GM12878 (cell line): ENCODE measurements at regions of chr4 and their contacts with region 1.

Region 1: DNA sequence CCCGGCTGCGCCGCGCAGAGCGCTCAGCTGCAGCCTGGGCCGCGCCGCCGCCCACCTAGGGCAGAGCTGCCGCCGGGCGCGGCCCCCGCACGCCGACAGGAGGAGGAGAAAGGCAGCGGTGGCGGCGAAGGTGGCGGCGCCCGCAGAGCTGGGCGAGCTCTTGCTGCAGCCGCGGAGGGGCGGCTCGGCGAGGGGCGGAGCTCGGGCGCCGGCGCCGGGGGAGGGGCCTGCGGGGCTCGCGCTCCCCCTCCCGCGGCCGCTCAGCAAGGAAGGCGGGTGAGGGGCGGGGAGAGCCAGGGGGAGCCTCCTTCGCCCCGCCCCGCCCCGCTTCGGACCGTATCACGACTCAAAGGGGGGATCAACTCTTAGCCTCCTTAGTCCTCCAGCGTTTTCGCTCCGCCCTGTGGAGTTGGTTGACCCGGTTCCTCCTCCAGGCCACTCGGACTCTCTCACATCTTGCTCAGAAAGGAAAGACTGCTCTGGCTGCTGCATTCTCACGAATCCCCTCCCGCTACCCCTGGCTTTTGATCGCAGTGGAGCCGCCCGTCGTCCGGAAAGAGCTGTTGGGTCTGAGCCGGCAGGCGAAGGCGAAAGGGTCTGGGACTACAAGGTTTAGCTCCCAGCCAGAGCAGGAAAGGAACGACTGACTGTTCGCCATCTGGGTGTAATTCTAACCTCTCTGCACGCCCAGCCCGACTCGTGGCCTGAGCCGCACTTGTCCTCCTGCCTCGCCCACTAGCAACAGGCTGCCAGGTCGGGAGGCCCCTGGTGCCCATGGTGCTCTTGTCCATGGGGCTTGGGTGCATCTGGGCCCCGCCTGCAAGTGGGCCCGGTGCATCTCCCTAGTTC is at the start of gene ATP8A1:
- DNase-seq: no peak
- ATAC-seq: peak; percentile 81
- H3K4me3 ChIP-seq: peak within 1 kb of the TSS; percentile 93
- H3K27ac ChIP-seq: peak within 1 kb of the TSS; percentile 91
- H3K4me1 ChIP-seq: peaks cover 5% of the 10 kb centered on the region; the same call in 1 of the 2 replicates
- H3K27me3 ChIP-seq: no peaks in the 10 kb centered on the region
- CTCF ChIP-seq: 0 out of 6 replicates have a peak, but pooled peaks of 1 of the 3 experiments have one; percentile 3
- EP300 ChIP-seq: 0 out of 4 replicates have a peak, but pooled peaks of 1 of the 2 experiments have one; percentile 18
- POLR2A ChIP-seq: peak; percentile 93
- RAD21 ChIP-seq: no peak
- polyA plus RNA-seq, gene ATP8A1: 9.0 to 9.5 TPM

Region 2: GRCh38 chr4:42596918-42597317 is 60.2 kb before region 1 on chr4:
- CTCF ChIA-PET with region 1: interaction called, 6 read pairs
- POLR2A ChIA-PET with region 1: interaction called, 3 read pairs
- RAD21 ChIA-PET with region 1: interaction called, 11 read pairs
- SMC1A ChIA-PET with region 1: interaction called, 7 read pairs
- in situ Hi-C with region 1: no loop called
- intact Hi-C with region 1: no loop called
- DNase-seq: peak; percentile 17
- ATAC-seq: peak; percentile 52
- H3K4me3 ChIP-seq: no peak overlapping the region
- H3K27ac ChIP-seq: no peak overlapping the region
- H3K4me1 ChIP-seq: no peaks in the 10 kb centered on the region
- H3K27me3 ChIP-seq: no peaks in the 10 kb centered on the region
- CTCF ChIP-seq: no peak
- EP300 ChIP-seq: no peak
- POLR2A ChIP-seq: no peak
- RAD21 ChIP-seq: no peak

Region 3: DNA sequence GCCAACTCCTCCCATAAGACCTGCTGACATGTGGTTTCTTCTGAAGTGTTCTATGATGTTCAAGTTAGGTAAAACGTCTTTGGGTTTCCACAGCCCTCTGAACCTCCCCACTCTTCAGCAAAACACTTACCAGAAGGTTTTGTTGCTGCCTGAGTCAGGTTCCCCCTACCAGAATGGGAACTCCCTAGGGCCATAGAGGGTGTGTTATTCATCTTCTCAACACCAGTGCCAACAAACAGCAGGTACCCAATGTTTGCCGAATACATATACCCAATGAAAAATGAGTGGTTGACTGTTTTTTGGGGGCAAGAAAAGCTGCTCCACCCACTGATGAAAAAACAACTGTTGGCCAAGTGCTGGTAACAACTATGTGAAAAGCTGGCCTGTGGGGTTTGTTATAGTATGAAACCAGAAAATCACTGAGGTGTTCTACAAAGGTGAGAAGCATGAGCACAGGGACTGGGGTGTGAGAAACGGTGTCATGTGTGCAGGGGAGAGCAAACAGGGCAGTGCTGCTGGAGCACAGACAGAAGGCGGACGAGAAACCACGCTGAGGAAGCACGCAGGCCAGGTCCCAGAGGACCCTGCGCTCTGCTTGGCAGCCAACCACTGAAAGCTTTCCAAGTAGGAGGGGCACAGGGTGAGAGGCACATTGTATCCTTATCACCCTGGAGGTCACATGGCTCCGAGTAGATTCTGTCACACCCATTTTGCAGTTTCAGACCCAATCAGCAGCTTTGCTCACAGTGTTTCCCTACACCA is 29.1 kb before region 1 on chr4:
- CTCF ChIA-PET with region 1: interaction called, 7 read pairs
- POLR2A ChIA-PET with region 1: interaction called, 95 read pairs
- RAD21 ChIA-PET with region 1: interaction called, 252 read pairs
- SMC1A ChIA-PET with region 1: interaction called, 478 read pairs
- in situ Hi-C with region 1: no loop called
- intact Hi-C with region 1: loop called (anchors 2 kb)
- DNase-seq: peak; percentile 97
- ATAC-seq: peak; percentile 92
- H3K4me3 ChIP-seq: peak overlapping the region; percentile 25; the same call in 1 of the 2 replicates
- H3K27ac ChIP-seq: peak overlapping the region; percentile 79
- H3K4me1 ChIP-seq: peaks cover 30% of the 10 kb centered on the region
- H3K27me3 ChIP-seq: no peaks in the 10 kb centered on the region
- CTCF ChIP-seq: no peak
- EP300 ChIP-seq: peak in 1 of 2 experiments; percentile 82; a peak in 3 of 4 replicates
- POLR2A ChIP-seq: peak; percentile 75
- RAD21 ChIP-seq: peak; percentile 32; the same call in 1 of the 2 replicates

Region 4: GRCh38 chr4:42638993-42639392 is 18.2 kb before region 1 on chr4:
- CTCF ChIA-PET with region 1: interaction called, 27 read pairs
- POLR2A ChIA-PET with region 1: interaction called, 167 read pairs
- RAD21 ChIA-PET with region 1: interaction called, 252 read pairs
- SMC1A ChIA-PET with region 1: interaction called, 478 read pairs
- in situ Hi-C with region 1: no loop called
- intact Hi-C with region 1: loop called (anchors 1 kb)
- DNase-seq: peak; percentile 92
- ATAC-seq: peak; percentile 72
- H3K4me3 ChIP-seq: peak overlapping the region; percentile 43
- H3K27ac ChIP-seq: peak overlapping the region; percentile 98
- H3K4me1 ChIP-seq: peaks cover 74% of the 10 kb centered on the region
- H3K27me3 ChIP-seq: no peaks in the 10 kb centered on the region
- CTCF ChIP-seq: no peak
- EP300 ChIP-seq: peak; percentile 81 to 96
- POLR2A ChIP-seq: no peak
- RAD21 ChIP-seq: peak; percentile 2; the same call in 1 of the 2 replicates

Region 5: GRCh38 chr4:42768125-42768748 is 111.1 kb after region 1 on chr4:
- CTCF ChIA-PET with region 1: interaction called, 12 read pairs
- POLR2A ChIA-PET with region 1: no interaction called
- RAD21 ChIA-PET with region 1: interaction called, 12 read pairs
- SMC1A ChIA-PET with region 1: interaction called, 6 read pairs
- in situ Hi-C with region 1: no loop called
- intact Hi-C with region 1: loop called (anchors 1 kb)
- DNase-seq: no peak
- ATAC-seq: peak; percentile 79
- H3K4me3 ChIP-seq: no peak overlapping the region
- H3K27ac ChIP-seq: no peak overlapping the region
- H3K4me1 ChIP-seq: no peaks in the 10 kb centered on the region
- H3K27me3 ChIP-seq: no peaks in the 10 kb centered on the region; a peak in 1 of 4 replicates
- CTCF ChIP-seq: peak in 2 of 3 experiments; percentile 16 to 28; a peak in 2 of 6 replicates
- EP300 ChIP-seq: no peak
- POLR2A ChIP-seq: no peak
- RAD21 ChIP-seq: 0 out of 2 replicates have a peak, but pooled peaks have one; percentile 39

Region 6: DNA sequence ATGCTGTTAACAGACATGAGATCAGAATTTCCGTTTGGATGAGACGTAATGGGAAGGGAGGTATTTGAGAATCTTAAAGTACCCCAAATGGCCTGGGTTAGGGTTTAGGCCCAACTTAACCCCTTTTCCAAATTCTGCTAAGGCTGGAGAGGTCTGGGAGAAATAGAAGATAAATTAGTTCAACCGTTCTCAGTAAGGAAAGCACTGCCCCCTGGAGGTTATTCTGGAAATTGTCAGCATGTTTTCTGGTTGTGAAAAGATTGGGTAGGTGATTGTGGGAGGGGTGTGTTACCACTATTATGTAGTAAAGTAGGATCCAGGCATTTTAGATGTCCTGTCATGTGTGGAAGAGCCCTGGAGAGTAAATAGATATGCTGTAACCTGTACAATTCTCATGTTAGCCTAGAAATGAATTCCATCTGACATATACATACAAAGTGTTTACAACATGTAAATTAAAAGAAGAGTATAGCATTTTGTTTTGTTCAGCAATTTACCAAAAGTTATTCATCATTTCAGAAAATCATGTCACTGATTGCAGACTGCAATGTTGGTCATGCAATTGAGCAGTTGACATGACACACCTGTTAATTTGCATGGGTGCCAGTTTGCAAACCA is 208.5 kb after region 1 on chr4:
- CTCF ChIA-PET with region 1: interaction called, 3 read pairs
- POLR2A ChIA-PET with region 1: no interaction called
- RAD21 ChIA-PET with region 1: no interaction called
- SMC1A ChIA-PET with region 1: no interaction called
- in situ Hi-C with region 1: no loop called
- intact Hi-C with region 1: loop called (anchors 5 kb)
- DNase-seq: no peak
- ATAC-seq: peak; percentile 85
- H3K4me3 ChIP-seq: no peak overlapping the region
- H3K27ac ChIP-seq: no peak overlapping the region
- H3K4me1 ChIP-seq: no peaks in the 10 kb centered on the region
- H3K27me3 ChIP-seq: no peaks in the 10 kb centered on the region
- CTCF ChIP-seq: peak; percentile 65 to 72 (median 68)
- EP300 ChIP-seq: no peak
- POLR2A ChIP-seq: no peak
- RAD21 ChIP-seq: peak; percentile 89